Activated CD4-positive, alpha-beta T cell treated with anti-CD3 and anti-CD28 coated beads, Interleukin-2, amount 10 ng/mL, durations not matched to agents 24 days and 14 days (primary cell): ENCODE measurements at regions of chr16 and their contacts with region 1.

Region 1: GRCh38 chr16:82263521-82264143 is 93.6 kb upstream of the MPHOSPH6 start:
- DNase-seq: peak; percentile 83
- H3K4me3 Mint-ChIP-seq: no peak overlapping the region
- H3K27ac Mint-ChIP-seq: no peak overlapping the region
- H3K4me1 Mint-ChIP-seq: no peaks in the 10 kb centered on the region
- H3K27me3 Mint-ChIP-seq: peaks cover 11% of the 10 kb centered on the region

Region 2: DNA sequence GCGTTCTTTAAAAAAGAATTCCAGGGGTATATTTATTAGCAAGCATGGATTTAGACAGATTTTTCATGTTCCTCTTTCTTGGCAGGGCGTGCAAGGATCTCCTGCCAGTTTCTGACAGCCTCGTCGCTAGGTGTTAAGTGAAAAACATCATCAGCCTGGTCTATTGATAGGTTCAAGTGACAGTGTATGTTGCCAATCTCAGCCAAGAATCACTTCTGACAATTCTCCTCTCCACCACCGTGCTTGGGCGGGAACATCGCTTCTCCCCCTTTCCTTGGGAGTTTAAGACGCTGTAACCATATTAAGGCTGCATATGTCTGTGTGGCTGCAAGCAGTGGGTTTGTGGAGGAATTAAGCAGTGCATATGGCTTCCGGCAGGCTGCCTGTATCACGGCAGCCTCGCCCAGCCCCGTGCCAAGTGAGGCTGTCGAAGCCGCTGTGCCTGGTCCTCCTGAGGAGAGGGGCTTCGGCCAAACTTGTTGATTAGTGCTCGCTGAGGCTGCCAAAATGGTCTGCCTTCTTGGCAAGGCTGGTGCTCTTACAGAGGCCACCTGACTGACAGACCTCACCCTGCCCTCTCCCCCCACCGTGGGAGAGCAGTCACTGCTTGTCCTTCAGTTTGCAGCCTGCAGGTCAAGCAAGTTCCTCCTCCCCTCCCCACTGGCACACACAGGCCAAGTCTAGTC is 38.6 kb after region 1 on chr16:
- intact Hi-C with region 1: no loop called
- DNase-seq: no peak
- H3K4me3 Mint-ChIP-seq: no peak overlapping the region
- H3K27ac Mint-ChIP-seq: no peak overlapping the region
- H3K4me1 Mint-ChIP-seq: no peaks in the 10 kb centered on the region
- H3K27me3 Mint-ChIP-seq: no peaks in the 10 kb centered on the region

Region 3: DNA sequence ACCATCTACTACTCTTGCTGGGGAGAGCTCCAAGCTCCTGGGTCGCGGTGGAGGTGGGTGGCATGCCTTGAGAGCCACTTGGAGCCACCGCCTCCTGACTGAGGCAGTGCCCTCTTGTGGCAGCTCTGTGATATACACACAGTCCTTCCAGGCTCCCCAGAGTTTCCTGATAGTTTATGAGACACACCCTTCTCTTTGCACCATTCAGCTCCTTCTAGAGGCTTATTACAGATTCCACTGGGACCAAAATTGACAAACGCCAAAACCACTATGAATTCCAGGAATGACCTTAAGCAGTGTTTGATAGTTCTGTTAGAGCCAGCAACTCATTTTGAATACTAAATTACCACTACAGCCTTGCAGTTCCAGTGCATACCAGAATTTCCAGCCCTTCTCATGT is 193.1 kb after region 1 on chr16:
- intact Hi-C with region 1: loop called (anchors 5 kb)
- DNase-seq: peak; percentile 76
- H3K4me3 Mint-ChIP-seq: no peak overlapping the region
- H3K27ac Mint-ChIP-seq: no peak overlapping the region
- H3K4me1 Mint-ChIP-seq: no peaks in the 10 kb centered on the region
- H3K27me3 Mint-ChIP-seq: no peaks in the 10 kb centered on the region

Region 4: DNA sequence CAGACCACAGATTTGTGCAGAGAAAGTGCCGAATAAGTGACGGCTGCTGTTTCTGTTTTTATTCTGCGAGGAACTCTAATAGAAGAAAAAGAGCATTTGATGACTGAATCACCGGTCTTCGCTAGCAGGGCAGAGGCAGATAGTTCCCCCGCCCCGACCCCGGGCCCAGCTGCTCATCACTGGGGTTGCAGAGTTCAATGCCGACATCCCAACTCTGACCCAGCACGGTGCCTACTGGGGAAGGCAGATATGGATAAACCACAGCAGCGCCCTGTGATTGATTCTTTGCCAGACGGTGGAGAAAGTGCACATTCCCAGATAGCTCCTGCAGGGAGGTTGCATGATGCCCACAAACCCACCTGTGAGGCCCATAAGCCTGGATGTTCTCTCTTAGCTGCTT is 1186.2 kb after region 1 on chr16:
- intact Hi-C with region 1: loop called (anchors 5 kb)
- DNase-seq: no peak
- H3K4me3 Mint-ChIP-seq: no peak overlapping the region
- H3K27ac Mint-ChIP-seq: no peak overlapping the region
- H3K4me1 Mint-ChIP-seq: no peaks in the 10 kb centered on the region
- H3K27me3 Mint-ChIP-seq: no peaks in the 10 kb centered on the region